A549 (cell line): ENCODE measurements at regions of chr18 and their contacts with region 1.

Region 1: GRCh38 chr18:45839414-45840395 is 14.2 kb downstream of the SIGLEC15 start:
- DNase-seq: peak in 1 of 2 experiments; percentile 63
- ATAC-seq: peak; percentile 80 to 90
- H3K4me3 ChIP-seq: no peak overlapping the region
- H3K27ac ChIP-seq: no peak overlapping the region
- H3K4me1 ChIP-seq: 0 out of 3 replicates have a peak, but pooled peaks cover 2% of the 10 kb centered on the region
- CTCF ChIP-seq: peak; percentile 44
- EP300 ChIP-seq: no peak
- POLR2A ChIP-seq: no peak
- RAD21 ChIP-seq: peak; percentile 59 to 68

Region 2: GRCh38 chr18:45715341-45715740 is 124.4 kb before region 1 on chr18:
- CTCF ChIA-PET with region 1: interaction called, 76 read pairs
- POLR2A ChIA-PET with region 1: no interaction called
- DNase-seq: peak in 1 of 2 experiments; percentile 41
- ATAC-seq: peak; percentile 24 to 59; a peak in 3 of 6 replicates
- H3K4me3 ChIP-seq: no peak overlapping the region
- H3K27ac ChIP-seq: no peak overlapping the region
- H3K4me1 ChIP-seq: peaks cover 19% of the 10 kb centered on the region
- CTCF ChIP-seq: no peak
- EP300 ChIP-seq: no peak
- POLR2A ChIP-seq: no peak
- RAD21 ChIP-seq: no peak

Region 3: GRCh38 chr18:46148810-46149209 is 309.1 kb after region 1 on chr18:
- CTCF ChIA-PET with region 1: no interaction called
- POLR2A ChIA-PET with region 1: no interaction called
- DNase-seq: peak; percentile 31 to 66
- ATAC-seq: peak; percentile 60 to 72; a peak in 4 of 6 replicates
- H3K4me3 ChIP-seq: no peak overlapping the region
- H3K27ac ChIP-seq: peak overlapping the region in 1 of 2 experiments; percentile 63; a peak in 1 of 6 replicates
- H3K4me1 ChIP-seq: peaks cover 23% of the 10 kb centered on the region
- CTCF ChIP-seq: peak; percentile 60
- EP300 ChIP-seq: no peak
- POLR2A ChIP-seq: no peak
- RAD21 ChIP-seq: peak; percentile 75 to 78